ENCODE measurements at regions of chr3 and their contacts with region 1.

Region 1: GRCh38 chr3:50436114-50436674 is 67.2 kb downstream of the CACNA2D2 start:
- DNase-seq: peak; percentile 22
- ATAC-seq: peak; percentile 90
- H3K4me3 ChIP-seq: no peak overlapping the region
- H3K27ac ChIP-seq: no peak overlapping the region
- H3K4me1 ChIP-seq: no peaks in the 10 kb centered on the region
- H3K27me3 ChIP-seq: no peaks in the 10 kb centered on the region
- CTCF ChIP-seq: peak; percentile 88

Region 2: DNA sequence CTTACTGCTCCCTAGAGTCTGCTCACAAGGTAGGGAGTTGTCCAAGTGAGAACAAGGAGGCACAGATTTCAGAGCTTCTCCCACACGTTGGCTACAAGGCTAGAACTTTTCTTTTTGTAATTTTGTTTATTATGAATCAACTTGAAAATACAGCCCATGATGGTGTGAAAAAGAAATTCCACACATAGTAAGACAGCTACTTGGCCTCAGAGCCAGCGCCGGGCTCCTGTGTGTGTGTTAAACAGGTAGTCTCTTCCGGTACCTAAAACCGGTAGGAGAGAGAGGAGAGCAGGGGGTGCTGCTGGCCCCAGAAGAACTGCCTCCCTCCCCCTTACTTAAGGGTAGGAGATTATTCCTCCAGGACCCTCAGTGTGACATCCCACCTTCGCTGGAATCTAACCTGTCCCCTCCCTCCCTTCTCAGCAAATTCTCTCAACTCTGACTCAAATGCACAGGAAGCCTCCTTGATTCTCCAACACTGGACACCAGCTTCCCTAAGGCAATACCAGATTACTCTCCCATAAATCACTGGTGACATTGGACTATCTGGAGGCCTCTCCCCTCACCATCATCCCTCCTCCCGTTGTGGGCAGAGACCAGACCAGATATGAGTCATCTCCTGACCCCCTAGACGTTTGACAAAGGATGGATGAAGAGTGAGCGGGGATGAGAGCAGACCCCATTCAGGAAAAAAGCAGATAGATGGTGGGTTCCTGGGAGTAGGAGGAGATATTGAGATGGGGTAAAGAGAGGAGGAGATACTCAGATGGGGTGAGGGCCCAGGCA is 645.4 kb before region 1 on chr3:
- CTCF ChIA-PET with region 1: no interaction called
- POLR2A ChIA-PET with region 1: no interaction called
- in situ Hi-C with region 1: no loop called
- intact Hi-C with region 1: no loop called
- DNase-seq: no peak
- ATAC-seq: no peak
- H3K4me3 ChIP-seq: no peak overlapping the region
- H3K27ac ChIP-seq: no peak overlapping the region
- H3K4me1 ChIP-seq: peaks cover 4% of the 10 kb centered on the region
- H3K27me3 ChIP-seq: no peaks in the 10 kb centered on the region
- CTCF ChIP-seq: no peak

Region 3: GRCh38 chr3:50466177-50466576 is 30.0 kb after region 1 on chr3:
- CTCF ChIA-PET with region 1: no interaction called
- POLR2A ChIA-PET with region 1: interaction called, 11 read pairs
- in situ Hi-C with region 1: no loop called
- intact Hi-C with region 1: no loop called
- DNase-seq: no peak
- ATAC-seq: no peak
- H3K4me3 ChIP-seq: no peak overlapping the region
- H3K27ac ChIP-seq: no peak overlapping the region
- H3K4me1 ChIP-seq: no peaks in the 10 kb centered on the region
- H3K27me3 ChIP-seq: no peaks in the 10 kb centered on the region
- CTCF ChIP-seq: no peak

Region 4: GRCh38 chr3:50542177-50543034 is 106.2 kb after region 1 on chr3:
- CTCF ChIA-PET with region 1: interaction called, 4 read pairs
- POLR2A ChIA-PET with region 1: no interaction called
- in situ Hi-C with region 1: no loop called
- intact Hi-C with region 1: loop called (anchors 2 kb)
- DNase-seq: peak; percentile 45
- ATAC-seq: peak; percentile 89
- H3K4me3 ChIP-seq: no peak overlapping the region
- H3K27ac ChIP-seq: no peak overlapping the region
- H3K4me1 ChIP-seq: no peaks in the 10 kb centered on the region
- H3K27me3 ChIP-seq: no peaks in the 10 kb centered on the region
- CTCF ChIP-seq: peak; percentile 85

Region 5: GRCh38 chr3:50587806-50588758 is 151.9 kb after region 1 on chr3:
- CTCF ChIA-PET with region 1: no interaction called
- POLR2A ChIA-PET with region 1: no interaction called
- in situ Hi-C with region 1: no loop called
- intact Hi-C with region 1: no loop called
- DNase-seq: no peak
- ATAC-seq: no peak
- H3K4me3 ChIP-seq: no peak overlapping the region
- H3K27ac ChIP-seq: no peak overlapping the region
- H3K4me1 ChIP-seq: no peaks in the 10 kb centered on the region
- H3K27me3 ChIP-seq: no peaks in the 10 kb centered on the region
- CTCF ChIP-seq: no peak